GM18951 (cell line): ENCODE measurements at regions of chr19 and their contacts with region 1.

Region 1: DNA sequence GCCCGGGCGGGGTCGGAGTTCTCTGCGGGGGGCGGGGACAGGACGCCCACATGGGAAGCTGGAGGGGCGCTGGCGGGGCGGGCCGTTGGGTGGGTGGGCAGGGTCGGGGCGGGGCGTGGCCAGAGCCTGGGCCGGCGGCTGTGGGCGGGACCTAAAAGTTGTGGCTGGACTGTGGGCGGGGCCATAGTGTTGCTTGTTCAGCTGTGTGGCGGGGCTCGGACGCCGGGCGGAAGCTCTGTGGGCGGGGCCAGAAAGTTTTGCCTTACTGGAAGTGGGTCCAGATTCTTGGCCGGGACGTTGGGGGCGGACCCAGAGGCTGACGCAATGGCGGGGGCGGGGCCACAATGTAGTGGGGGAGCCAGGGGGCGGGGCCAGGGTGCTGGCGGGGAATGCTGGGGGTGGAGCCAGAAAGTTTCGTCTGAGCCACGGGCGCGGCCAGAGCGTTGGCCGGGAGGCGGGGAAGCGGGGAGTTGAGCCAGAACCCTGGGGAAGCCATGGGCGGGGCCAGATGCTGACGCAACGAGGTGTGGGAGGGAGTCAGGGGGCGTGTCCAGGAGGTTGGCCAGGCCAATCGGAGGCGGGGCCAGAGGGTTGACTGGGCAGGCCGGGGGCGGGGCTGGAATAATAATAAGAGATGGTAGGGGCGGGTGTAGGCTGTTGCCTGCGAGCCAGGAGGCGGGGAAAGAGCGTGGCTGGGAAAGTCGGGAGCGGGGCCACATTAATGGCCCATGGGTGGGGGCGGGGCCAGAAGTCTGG is 541 bp downstream of the CCDC9 start:
- POLR2A ChIP-seq: peak; percentile 16

Region 2: DNA sequence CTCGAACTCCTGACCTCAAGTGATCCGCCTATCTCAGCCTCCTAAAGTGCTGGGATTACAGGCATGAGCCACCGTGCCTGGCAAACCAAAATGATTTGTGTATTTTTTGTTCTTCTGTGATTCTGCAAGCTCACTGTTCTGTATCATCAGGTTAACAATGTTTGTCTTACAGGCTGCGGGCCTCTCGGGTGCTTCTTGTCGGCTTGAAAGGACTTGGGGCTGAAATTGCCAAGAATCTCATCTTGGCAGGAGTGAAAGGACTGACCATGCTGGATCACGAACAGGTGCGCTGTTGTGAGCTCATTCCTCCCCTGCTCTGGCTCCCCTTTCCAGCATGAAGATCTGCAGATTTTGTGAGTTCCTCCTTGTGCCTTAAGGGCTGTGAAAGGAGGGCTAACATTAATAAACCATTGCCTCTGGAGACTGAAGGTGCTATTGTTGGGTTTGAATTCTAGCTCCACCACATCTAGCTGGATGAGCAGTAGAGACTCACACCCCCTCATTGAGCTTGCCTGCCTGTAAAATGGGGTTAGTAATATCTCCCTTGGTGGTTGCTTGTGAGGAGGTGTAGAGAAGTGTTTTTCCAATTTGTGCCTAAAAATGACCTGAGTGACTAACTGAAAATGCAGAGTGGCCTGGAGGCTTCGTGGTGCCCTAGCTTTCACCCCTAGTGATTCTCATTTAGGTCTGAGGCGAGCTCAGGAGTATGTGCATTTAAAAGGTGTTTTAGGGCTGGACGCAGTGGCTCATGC is 113.4 kb before region 1 on chr19:
- in situ Hi-C with region 1: loop called (anchors 10 kb)
- POLR2A ChIP-seq: no peak

Region 3: GRCh38 chr19:47336853-47337279 is 80.0 kb after region 1 on chr19:
- in situ Hi-C with region 1: no loop called
- POLR2A ChIP-seq: no peak